Heart right ventricle (tissue), 16 donors: ENCODE measurements at regions of chr5 and their contacts with region 1.

Region 1: DNA sequence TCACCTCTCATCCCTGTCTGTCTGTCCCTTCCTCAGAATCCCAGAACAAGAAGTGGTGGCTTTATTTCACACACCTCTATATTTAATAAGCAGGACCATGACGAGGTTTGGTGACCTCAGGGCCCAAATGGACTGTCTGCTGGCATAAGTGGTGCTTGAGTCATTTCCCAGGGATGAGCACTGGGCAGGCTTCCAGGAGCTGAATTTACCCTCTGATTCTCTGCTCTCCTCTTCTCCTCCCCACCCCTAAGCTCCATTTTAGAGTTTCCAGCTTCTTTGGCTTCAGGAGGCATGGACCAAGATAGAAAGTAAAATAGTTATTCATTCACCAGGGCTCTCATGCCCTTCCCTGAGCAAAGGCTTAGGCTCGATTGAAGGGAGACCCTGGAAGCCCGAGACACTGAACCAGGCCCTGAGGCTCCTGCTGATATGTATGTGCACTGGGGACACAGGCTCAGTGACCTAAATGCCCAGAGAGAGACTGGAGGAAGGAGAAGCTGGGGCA is 69.1 kb downstream of the PPARGC1B start:
- DNase-seq: peak in 1 of 2 donors; percentile 73
- ATAC-seq: peak in 6 of 8 donors; percentile 12 to 68 (median 38)
- H3K4me3 ChIP-seq: no peak overlapping the region
- H3K27ac ChIP-seq: peak overlapping the region in 9 of 10 donors; percentile 71 to 92 (median 88)
- H3K4me1 ChIP-seq: peaks cover 33 to 100% (median 89%) of the 10 kb centered on the region in 9 donors
- H3K27me3 ChIP-seq: no peaks in the 10 kb centered on the region
- CTCF ChIP-seq: no peak

Region 2: GRCh38 chr5:149782018-149782894 is 16.9 kb before region 1 on chr5:
- intact Hi-C with region 1: loop called in 2 of 10 experiments (anchors 2 kb)
- DNase-seq: peak; percentile 63 to 64
- ATAC-seq: peak; percentile 29 to 76 (median 56)
- H3K4me3 ChIP-seq: no peak overlapping the region
- H3K27ac ChIP-seq: peak overlapping the region; percentile 58 to 90 (median 81)
- H3K4me1 ChIP-seq: peaks cover 22 to 88% (median 64%) of the 10 kb centered on the region in 9 donors
- H3K27me3 ChIP-seq: no peaks in the 10 kb centered on the region
- CTCF ChIP-seq: no peak

Region 3: GRCh38 chr5:149820536-149821510 is 21.7 kb after region 1 on chr5:
- intact Hi-C with region 1: loop called in 2 of 10 experiments (anchors 2 kb)
- DNase-seq: no peak
- ATAC-seq: no peak
- H3K4me3 ChIP-seq: peak overlapping the region; percentile 15 to 49 (median 37)
- H3K27ac ChIP-seq: peak overlapping the region in 9 of 10 donors; percentile 50 to 89 (median 79)
- H3K4me1 ChIP-seq: peaks cover 36 to 83% (median 53%) of the 10 kb centered on the region in 9 donors
- H3K27me3 ChIP-seq: no peaks in the 10 kb centered on the region
- CTCF ChIP-seq: no peak

Region 4: GRCh38 chr5:149932445-149933350 is 133.5 kb after region 1 on chr5:
- intact Hi-C with region 1: no loop called
- DNase-seq: no peak
- ATAC-seq: peak in 3 of 8 donors; percentile 38 to 67 (median 55)
- H3K4me3 ChIP-seq: peak overlapping the region in 6 of 10 donors; percentile 8 to 40 (median 20)
- H3K27ac ChIP-seq: peak overlapping the region in 1 of 10 donors; percentile 15
- H3K4me1 ChIP-seq: peaks cover 0 to 12% (median 0%) of the 10 kb centered on the region in 9 donors
- H3K27me3 ChIP-seq: peaks cover 0 to 6% (median 0%) of the 10 kb centered on the region in 7 donors
- CTCF ChIP-seq: peak in 6 of 9 donors; percentile 31 to 50 (median 36)

Region 5: DNA sequence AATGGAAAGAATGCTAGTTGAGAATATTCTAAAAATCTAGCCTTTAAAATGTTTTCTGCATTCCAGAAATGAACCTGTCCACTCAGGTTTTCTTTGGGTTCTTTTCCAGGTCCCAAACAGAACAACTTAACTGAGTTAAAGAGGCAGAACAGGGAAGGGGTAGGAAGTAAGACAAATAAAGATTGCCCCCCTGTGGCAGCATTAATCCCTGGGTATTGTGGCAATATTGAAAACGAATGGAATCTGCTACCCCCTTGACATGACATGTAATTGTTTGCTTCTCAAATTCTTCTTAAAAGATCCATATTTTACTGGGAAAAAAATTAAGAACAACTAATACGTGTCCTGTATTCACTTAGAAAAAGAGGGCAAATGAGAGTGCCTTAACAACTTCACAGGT is 911.0 kb after region 1 on chr5:
- intact Hi-C with region 1: no loop called
- DNase-seq: no peak
- ATAC-seq: no peak
- H3K4me3 ChIP-seq: no peak overlapping the region
- H3K27ac ChIP-seq: no peak overlapping the region
- H3K4me1 ChIP-seq: peaks cover 0 to 9% (median 0%) of the 10 kb centered on the region in 9 donors
- H3K27me3 ChIP-seq: no peaks in the 10 kb centered on the region
- CTCF ChIP-seq: peak; percentile 9 to 55 (median 40)